Dendritic cell treated with granulocyte-macrophage colony-stimulating factor and Interleukin-4, amounts not matched to agents 40 ng/mL and 50 ng/mL, for 4 days (primary cell): ENCODE measurements at regions of chr5 and their contacts with region 1.

Region 1: DNA sequence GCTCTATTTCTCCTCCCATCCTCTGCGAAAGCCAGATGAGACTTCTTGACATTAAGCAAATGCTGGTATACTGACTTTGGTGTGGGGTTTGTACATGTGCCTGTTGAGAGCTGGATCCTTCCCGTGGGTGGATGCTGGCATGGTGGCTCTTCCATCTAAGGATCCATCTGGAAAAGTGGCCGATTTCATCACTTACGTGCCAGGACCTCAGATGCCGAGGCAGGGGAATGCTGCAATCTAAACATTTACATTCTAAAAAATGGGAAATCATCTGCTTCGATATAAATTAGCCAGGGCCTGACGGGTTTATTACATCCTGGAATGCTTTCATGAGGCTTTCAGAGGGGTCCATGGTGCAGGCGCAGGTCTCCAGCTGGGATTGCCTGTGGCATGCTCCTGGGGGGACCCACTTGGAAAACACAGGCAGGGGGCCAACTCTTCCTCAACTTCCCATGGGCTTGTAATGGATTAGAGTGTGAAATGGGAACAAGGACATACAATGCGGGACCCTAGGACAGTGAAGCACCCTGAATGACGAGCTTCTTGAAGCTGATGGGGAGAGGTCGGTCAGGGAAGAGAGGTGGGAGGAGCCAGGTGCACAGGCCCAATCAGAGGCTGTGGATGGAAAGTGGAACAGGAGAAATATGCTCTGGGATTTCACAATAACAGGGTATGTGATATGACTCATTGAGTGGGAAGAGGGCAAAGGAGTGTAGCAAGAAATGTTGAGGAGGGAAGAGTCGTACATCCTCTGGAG is 105.5 kb upstream of the PITX1 start:
- H3K4me3 Mint-ChIP-seq: no peak overlapping the region
- H3K27ac Mint-ChIP-seq: peak overlapping the region; percentile 67
- H3K4me1 Mint-ChIP-seq: peaks cover 73% of the 10 kb centered on the region
- H3K27me3 Mint-ChIP-seq: peaks cover 6% of the 10 kb centered on the region

Region 2: GRCh38 chr5:135053278-135053677 is 86.3 kb before region 1 on chr5:
- intact Hi-C with region 1: no loop called
- H3K4me3 Mint-ChIP-seq: no peak overlapping the region
- H3K27ac Mint-ChIP-seq: no peak overlapping the region
- H3K4me1 Mint-ChIP-seq: no peaks in the 10 kb centered on the region
- H3K27me3 Mint-ChIP-seq: peaks cover 90% of the 10 kb centered on the region

Region 3: DNA sequence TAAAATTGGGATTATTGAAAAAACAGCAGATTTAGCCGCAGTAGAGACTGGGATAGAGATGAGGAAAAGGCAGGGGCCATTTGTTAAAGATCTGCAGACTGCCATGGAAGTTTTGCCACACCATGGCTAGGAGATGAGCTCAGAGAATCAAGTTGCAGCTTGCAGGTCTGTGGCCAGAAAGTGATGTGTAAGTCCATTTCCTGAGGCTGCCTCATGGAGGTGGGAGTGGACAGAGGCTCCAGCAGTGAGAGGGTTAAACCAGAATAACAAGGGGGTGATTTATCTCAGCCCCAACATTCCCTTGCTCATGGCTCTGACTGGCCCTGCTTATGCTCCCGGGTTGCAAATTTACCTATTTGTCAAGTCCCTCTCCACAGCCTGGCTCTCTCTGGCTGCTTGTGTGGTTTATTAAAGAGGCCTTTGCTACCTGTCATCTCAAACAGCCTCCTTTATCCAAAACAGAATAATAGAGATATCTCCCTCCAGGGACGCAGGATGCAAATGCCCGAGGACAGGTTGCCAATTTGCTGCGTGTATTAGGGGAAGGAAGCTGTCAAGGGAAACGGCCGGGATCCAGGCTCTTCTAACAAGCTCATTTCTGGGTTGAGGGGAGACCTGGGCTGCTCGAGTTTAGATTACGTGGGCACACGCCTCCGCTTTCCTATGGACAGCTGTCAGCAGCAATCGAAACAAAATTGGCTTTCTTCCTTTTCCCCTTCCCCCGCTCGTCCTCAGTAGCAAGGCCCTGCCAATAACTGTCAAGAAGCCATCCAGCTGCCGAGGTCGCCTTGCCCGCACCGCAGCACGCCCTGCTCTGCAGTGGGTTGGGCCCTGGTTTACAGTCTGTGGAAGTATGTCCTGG is 32.7 kb before region 1 on chr5:
- intact Hi-C with region 1: loop called (anchors 5 kb)
- H3K4me3 Mint-ChIP-seq: no peak overlapping the region
- H3K27ac Mint-ChIP-seq: peak overlapping the region; percentile 34
- H3K4me1 Mint-ChIP-seq: peaks cover 67% of the 10 kb centered on the region
- H3K27me3 Mint-ChIP-seq: peaks cover 16% of the 10 kb centered on the region

Region 4: GRCh38 chr5:135116160-135116561 is 23.4 kb before region 1 on chr5:
- intact Hi-C with region 1: loop called (anchors 1 kb)
- H3K4me3 Mint-ChIP-seq: peak overlapping the region; percentile 48
- H3K27ac Mint-ChIP-seq: peak overlapping the region; percentile 99
- H3K4me1 Mint-ChIP-seq: peaks cover 97% of the 10 kb centered on the region
- H3K27me3 Mint-ChIP-seq: peaks cover 2% of the 10 kb centered on the region